HEK293 (cell line): ENCODE measurements at regions of chr18 and their contacts with region 1.

Region 1: DNA sequence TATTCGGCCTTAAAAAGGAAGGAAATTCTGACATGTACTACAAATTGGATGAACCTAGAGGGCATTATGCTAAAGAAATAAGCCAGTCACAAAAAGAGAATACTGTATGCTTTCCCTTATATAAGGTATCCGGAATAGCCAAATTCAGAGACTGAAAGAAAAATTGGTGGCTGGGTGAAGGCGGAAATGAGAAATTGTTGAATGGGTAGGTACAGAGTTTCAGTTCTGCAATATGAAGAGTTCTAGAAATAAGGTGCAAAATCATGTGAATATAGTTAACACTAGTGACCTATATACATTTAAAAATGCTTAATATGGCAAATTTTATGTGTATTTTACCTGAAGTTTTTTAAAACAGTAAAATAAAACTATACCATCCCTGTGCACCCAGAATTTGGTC is 43.1 kb downstream of the RMP24 start:
- H3K4me3 ChIP-seq: no peak overlapping the region
- H3K27ac ChIP-seq: no peak overlapping the region
- H3K4me1 ChIP-seq: no peaks in the 10 kb centered on the region
- CTCF ChIP-seq: no peak

Region 2: DNA sequence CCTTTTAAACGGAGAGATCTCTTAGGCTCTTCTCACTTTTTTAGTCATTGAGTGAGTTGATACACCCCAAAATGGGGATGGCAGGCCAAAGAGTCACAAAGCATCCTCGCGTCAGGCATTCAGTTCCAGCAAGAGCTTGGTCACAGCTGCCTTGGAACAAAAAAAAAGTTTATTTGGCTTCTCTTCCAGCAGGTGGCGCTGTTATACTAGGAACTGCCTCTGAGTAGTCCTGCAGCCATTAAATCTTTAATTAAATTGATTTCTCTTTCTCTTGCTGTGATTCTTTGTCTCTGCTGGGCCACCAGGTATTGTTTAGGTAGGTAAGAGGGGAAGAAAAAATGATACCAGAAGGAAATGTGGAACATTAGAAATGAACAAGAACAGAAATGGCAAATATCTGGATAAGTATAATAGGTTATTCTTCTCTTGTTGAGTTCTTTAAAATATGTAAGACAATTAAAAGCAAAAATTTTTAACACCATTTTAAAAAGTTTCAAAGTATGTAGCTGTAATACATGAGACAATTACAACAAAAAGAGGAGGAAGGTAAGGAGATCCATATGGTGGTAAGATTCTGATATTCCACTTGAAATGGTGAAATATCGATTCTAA is 259.0 kb before region 1 on chr18:
- CTCF ChIA-PET with region 1: interaction called, 15 read pairs
- POLR2A ChIA-PET with region 1: no interaction called
- H3K4me3 ChIP-seq: no peak overlapping the region
- H3K27ac ChIP-seq: no peak overlapping the region
- H3K4me1 ChIP-seq: no peaks in the 10 kb centered on the region
- CTCF ChIP-seq: peak; percentile 68

Region 3: GRCh38 chr18:36028859-36029258 is 13.2 kb after region 1 on chr18:
- CTCF ChIA-PET with region 1: interaction called, 42 read pairs
- POLR2A ChIA-PET with region 1: no interaction called
- H3K4me3 ChIP-seq: no peak overlapping the region
- H3K27ac ChIP-seq: no peak overlapping the region
- H3K4me1 ChIP-seq: no peaks in the 10 kb centered on the region
- CTCF ChIP-seq: no peak

Region 4: GRCh38 chr18:36095936-36096519 is 80.4 kb after region 1 on chr18:
- CTCF ChIA-PET with region 1: interaction called, 27 read pairs
- POLR2A ChIA-PET with region 1: no interaction called
- H3K4me3 ChIP-seq: no peak overlapping the region
- H3K27ac ChIP-seq: no peak overlapping the region
- H3K4me1 ChIP-seq: no peaks in the 10 kb centered on the region
- CTCF ChIP-seq: peak; percentile 48; the same call in 1 of the 2 replicates

Region 5: GRCh38 chr18:36279001-36279400 is 263.4 kb after region 1 on chr18:
- CTCF ChIA-PET with region 1: interaction called, 66 read pairs
- POLR2A ChIA-PET with region 1: no interaction called
- H3K4me3 ChIP-seq: no peak overlapping the region
- H3K27ac ChIP-seq: no peak overlapping the region
- H3K4me1 ChIP-seq: no peaks in the 10 kb centered on the region
- CTCF ChIP-seq: no peak

Region 6: DNA sequence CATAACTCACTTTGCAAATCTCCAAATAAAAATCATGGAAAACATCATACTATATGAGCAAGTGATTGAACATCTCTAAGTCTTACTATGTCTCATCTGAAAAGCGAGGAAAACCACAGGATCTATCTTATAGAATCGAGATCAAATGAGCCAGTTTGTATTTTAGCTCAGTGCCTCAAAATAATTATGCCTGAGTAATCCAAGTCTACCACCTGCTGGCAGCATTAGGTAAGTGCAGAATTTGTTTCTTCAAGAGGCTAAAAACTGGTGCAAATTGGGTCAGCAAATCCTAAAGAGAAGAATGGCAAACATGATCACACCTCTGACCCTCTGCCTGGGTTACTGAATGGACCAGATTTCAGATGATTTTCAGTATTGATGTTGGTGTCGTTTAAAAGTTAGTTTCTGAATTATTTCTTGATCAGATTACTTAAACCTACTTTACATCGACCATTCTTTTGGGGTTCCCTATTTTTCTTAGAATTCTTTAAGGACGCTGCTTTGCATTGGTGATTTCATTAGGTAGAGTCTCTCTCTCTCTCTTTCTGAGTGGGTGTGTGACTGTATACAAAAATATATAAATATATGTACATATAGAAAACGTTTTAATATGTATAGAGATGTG is 269.2 kb after region 1 on chr18:
- CTCF ChIA-PET with region 1: interaction called, 66 read pairs
- POLR2A ChIA-PET with region 1: no interaction called
- H3K4me3 ChIP-seq: no peak overlapping the region
- H3K27ac ChIP-seq: no peak overlapping the region
- H3K4me1 ChIP-seq: no peaks in the 10 kb centered on the region
- CTCF ChIP-seq: peak; percentile 80; the same call in 1 of the 2 replicates